ENCODE measurements at regions of chr4 and their contacts with region 1.

Region 1: GRCh38 chr4:6640292-6641163 is at the start of gene MRFAP1:
- DNase-seq: peak; percentile 90 to 98 (median 95)
- ATAC-seq: peak; percentile 79
- H3K4me3 ChIP-seq: peak within 1 kb of the TSS; percentile 96 to 97
- H3K4me3 Mint-ChIP-seq: peak within 1 kb of the TSS; percentile 99
- H3K27ac ChIP-seq: peak within 1 kb of the TSS; percentile 96
- H3K27ac Mint-ChIP-seq: peak within 1 kb of the TSS; percentile 99
- H3K4me1 ChIP-seq: peaks cover 17% of the 10 kb centered on the region
- H3K4me1 Mint-ChIP-seq: peaks cover 41% of the 10 kb centered on the region
- H3K27me3 ChIP-seq: no peaks in the 10 kb centered on the region
- H3K27me3 Mint-ChIP-seq: no peaks in the 10 kb centered on the region
- CTCF ChIP-seq: no peak
- total RNA-seq, gene MRFAP1: 177 to 183 TPM

Region 2: DNA sequence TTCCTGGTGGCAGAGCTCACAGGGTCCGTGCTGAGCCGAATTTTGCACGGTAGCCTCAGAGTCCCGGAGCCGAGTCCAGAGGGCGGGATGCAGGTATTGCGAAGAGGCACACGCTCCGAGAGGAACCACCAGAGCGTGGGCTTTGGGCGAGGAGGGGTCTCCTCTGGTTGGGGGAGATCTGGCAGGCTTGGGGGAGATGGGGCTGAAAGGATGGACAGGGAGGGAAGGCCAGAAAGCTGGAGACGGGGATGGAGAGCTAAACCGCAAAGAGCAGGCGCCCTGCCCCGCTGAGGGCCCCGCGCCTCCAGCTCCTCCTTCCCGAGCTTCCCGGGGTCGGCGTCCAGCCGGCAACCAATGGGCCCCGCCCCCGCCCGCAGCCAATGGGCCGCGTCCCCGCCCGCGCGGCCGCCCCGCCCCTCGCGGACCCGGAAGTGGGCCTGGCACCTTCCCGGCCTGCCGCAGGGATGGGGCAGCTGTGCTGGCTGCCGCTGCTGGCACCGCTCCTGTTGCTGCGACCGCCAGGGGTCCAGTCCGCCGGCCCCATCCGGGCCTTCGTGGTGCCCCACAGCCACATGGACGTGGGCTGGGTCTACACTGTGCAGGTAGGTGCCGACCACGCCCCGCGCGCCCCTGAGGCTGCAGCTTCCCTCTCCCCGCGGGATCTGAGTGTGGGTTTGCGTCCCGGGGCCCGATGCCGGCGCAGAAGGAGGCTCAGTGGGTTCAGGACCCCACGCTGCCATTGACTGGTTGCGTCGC is 65.6 kb before region 1 on chr4 and contains the start of gene MAN2B2:
- CTCF ChIA-PET with region 1: no interaction called
- POLR2A ChIA-PET with region 1: interaction called, 3 read pairs
- intact Hi-C with region 1: loop called (anchors 1 kb)
- DNase-seq: peak; percentile 62 to 89 (median 82)
- ATAC-seq: peak; percentile 94
- H3K4me3 ChIP-seq: peak within 1 kb of the TSS; percentile 99
- H3K4me3 Mint-ChIP-seq: peak within 1 kb of the TSS; percentile 91
- H3K27ac ChIP-seq: peak within 1 kb of the TSS; percentile 80 to 85
- H3K27ac Mint-ChIP-seq: peak within 1 kb of the TSS; percentile 84
- H3K4me1 ChIP-seq: peaks cover 22% of the 10 kb centered on the region
- H3K4me1 Mint-ChIP-seq: peaks cover 21% of the 10 kb centered on the region
- H3K27me3 ChIP-seq: no peaks in the 10 kb centered on the region
- H3K27me3 Mint-ChIP-seq: no peaks in the 10 kb centered on the region
- CTCF ChIP-seq: no peak
- total RNA-seq, gene MAN2B2: 26.4 to 26.7 TPM

Region 3: DNA sequence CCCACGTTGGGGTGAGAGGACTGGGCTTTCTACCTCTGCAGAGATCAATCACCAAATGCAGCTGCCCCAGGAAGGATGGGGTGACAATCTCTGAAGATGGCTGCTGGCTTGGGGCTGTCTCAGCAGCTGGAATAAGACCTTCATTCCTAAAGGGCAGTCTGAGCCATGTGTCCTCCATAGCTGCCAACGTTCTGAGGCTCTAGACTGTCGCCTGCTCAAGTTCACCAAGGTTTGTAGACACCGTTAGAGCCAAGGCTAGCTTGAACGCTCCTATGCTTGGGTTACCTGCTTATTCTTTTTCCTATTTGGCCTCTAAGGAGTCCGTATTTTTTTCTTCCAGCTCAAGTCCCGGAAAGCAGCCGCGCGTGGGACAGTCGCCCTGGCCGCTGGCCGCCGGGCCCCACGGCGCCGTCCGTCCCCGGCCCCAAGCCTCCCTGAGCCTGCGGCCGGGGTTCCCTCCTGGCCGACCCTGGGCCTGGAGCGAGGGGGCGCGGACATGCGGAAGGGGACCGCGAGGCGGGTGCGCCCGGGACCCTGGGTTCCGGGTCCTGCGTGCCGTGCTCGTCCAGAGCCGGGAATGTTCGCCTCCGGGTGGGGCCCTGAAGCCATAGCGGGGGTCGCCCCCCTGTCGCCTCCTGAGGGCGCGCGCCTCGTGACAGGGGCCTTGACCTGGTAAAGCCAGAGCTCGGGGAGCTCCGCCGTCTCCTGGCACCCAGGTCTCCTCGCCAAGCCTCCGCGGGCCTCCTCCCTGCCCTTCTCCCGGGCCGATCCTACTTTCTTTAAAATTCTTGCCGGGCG is 23.3 kb after region 1 on chr4:
- CTCF ChIA-PET with region 1: interaction called, 5 read pairs
- POLR2A ChIA-PET with region 1: interaction called, 11 read pairs
- intact Hi-C with region 1: loop called (anchors 2 kb)
- DNase-seq: no peak
- ATAC-seq: no peak
- H3K4me3 ChIP-seq: peak overlapping the region; percentile 29 to 42
- H3K4me3 Mint-ChIP-seq: peak overlapping the region; percentile 52
- H3K27ac ChIP-seq: no peak overlapping the region
- H3K27ac Mint-ChIP-seq: no peak overlapping the region
- H3K4me1 ChIP-seq: peaks cover 14% of the 10 kb centered on the region
- H3K4me1 Mint-ChIP-seq: peaks cover 8% of the 10 kb centered on the region
- H3K27me3 ChIP-seq: peaks cover 0 to 12% of the 10 kb centered on the region in 2 experiments
- H3K27me3 Mint-ChIP-seq: peaks cover 12% of the 10 kb centered on the region
- CTCF ChIP-seq: no peak

Region 4: GRCh38 chr4:6709230-6710114 is 68.9 kb after region 1 on chr4 and contains the start of gene MRFAP1L1:
- CTCF ChIA-PET with region 1: interaction called, 19 read pairs
- POLR2A ChIA-PET with region 1: interaction called, 19 read pairs
- intact Hi-C with region 1: loop called (anchors 1 kb)
- DNase-seq: peak; percentile 92 to 99 (median 97)
- ATAC-seq: peak; percentile 89
- H3K4me3 ChIP-seq: peak within 1 kb of the TSS; percentile 73 to 86
- H3K4me3 Mint-ChIP-seq: peak within 1 kb of the TSS; percentile 98
- H3K27ac ChIP-seq: peak within 1 kb of the TSS; percentile 79
- H3K27ac Mint-ChIP-seq: peak within 1 kb of the TSS; percentile 99
- H3K4me1 ChIP-seq: peaks cover 48% of the 10 kb centered on the region
- H3K4me1 Mint-ChIP-seq: peaks cover 65% of the 10 kb centered on the region
- H3K27me3 ChIP-seq: no peaks in the 10 kb centered on the region
- H3K27me3 Mint-ChIP-seq: no peaks in the 10 kb centered on the region
- CTCF ChIP-seq: no peak
- total RNA-seq, gene MRFAP1L1: 27.5 to 30.0 TPM

Region 5: GRCh38 chr4:6909073-6909965 is 268.8 kb after region 1 on chr4 and contains the start of gene TBC1D14:
- CTCF ChIA-PET with region 1: no interaction called
- POLR2A ChIA-PET with region 1: interaction called, 7 read pairs
- intact Hi-C with region 1: loop called in 1 of 2 experiments (anchors 1 kb)
- DNase-seq: peak; percentile 72 to 94 (median 84)
- ATAC-seq: peak; percentile 85
- H3K4me3 ChIP-seq: peak within 1 kb of the TSS; percentile 78 to 80
- H3K4me3 Mint-ChIP-seq: peak within 1 kb of the TSS; percentile 92
- H3K27ac ChIP-seq: peak within 1 kb of the TSS; percentile 81 to 98
- H3K27ac Mint-ChIP-seq: peak within 1 kb of the TSS; percentile 91
- H3K4me1 ChIP-seq: peaks cover 37% of the 10 kb centered on the region
- H3K4me1 Mint-ChIP-seq: peaks cover 53% of the 10 kb centered on the region
- H3K27me3 ChIP-seq: no peaks in the 10 kb centered on the region
- H3K27me3 Mint-ChIP-seq: no peaks in the 10 kb centered on the region
- CTCF ChIP-seq: no peak
- total RNA-seq, gene TBC1D14: 29.2 to 30.9 TPM

Region 6: DNA sequence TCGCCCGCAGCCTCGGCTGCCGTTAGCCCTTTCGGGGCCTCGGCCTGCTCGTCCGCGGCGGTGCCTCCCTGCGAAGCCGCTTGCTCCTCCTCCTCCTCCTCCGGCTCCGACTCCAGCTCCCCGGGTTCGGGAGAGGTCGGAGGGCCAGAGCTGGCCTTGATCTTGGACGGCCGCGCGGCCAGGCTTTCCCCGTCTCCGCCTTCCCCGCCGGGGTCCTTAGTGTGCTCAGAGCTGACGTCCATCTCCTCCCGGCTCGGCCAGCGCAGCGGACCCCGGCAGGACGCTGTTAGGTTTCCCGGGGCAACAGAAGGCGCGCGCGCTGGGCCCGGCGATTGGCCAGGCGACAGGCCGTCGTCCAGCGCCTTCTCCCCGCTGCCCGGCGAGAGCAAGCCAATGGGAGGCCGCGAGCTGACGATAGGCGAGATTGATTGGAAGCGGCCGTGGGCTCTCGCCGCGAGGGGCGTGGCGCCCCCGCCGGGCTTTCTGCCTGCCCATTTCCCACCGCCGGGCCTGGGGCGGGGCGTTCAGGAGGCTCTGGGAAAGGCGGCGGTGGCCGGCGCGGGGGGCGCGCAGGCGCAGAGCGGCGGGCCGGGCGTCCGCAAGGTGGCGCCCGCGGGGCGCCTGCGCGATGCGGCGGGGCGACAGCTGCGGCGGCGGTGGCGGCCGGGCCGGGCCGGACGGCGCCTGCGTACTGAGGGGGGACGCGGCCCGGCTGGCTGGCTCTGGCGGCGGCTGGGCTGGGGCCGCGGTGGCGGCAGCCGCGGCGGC is 402.4 kb after region 1 on chr4 and contains the start of gene TADA2B:
- CTCF ChIA-PET with region 1: no interaction called
- POLR2A ChIA-PET with region 1: interaction called, 6 read pairs
- intact Hi-C with region 1: loop called in 1 of 2 experiments (anchors 5 kb)
- DNase-seq: peak; percentile 74 to 95 (median 89)
- ATAC-seq: peak; percentile 76
- H3K4me3 ChIP-seq: peak within 1 kb of the TSS; percentile 83 to 94
- H3K4me3 Mint-ChIP-seq: peak within 1 kb of the TSS; percentile 91
- H3K27ac ChIP-seq: peak within 1 kb of the TSS; percentile 63 to 84
- H3K27ac Mint-ChIP-seq: peak within 1 kb of the TSS; percentile 88
- H3K4me1 ChIP-seq: peaks cover 40% of the 10 kb centered on the region
- H3K4me1 Mint-ChIP-seq: peaks cover 44% of the 10 kb centered on the region
- H3K27me3 ChIP-seq: no peaks in the 10 kb centered on the region
- H3K27me3 Mint-ChIP-seq: no peaks in the 10 kb centered on the region
- CTCF ChIP-seq: no peak
- total RNA-seq, gene TADA2B: 41.9 to 45.4 TPM

Measured in CD8-positive, alpha-beta T cell (primary cell).